Activated CD4-positive, alpha-beta memory T cell treated with anti-CD3 and anti-CD28 coated beads for 36 hours (primary cell): ENCODE measurements at regions of chr19 and their contacts with region 1.

Region 1: GRCh38 chr19:15101479-15102082 is 5.6 kb upstream of the SYDE1 start:
- DNase-seq: peak; percentile 76
- H3K4me3 Mint-ChIP-seq: no peak overlapping the region
- H3K27ac Mint-ChIP-seq: no peak overlapping the region
- H3K4me1 Mint-ChIP-seq: peaks cover 1% of the 10 kb centered on the region
- H3K27me3 Mint-ChIP-seq: peaks cover 12% of the 10 kb centered on the region

Region 2: GRCh38 chr19:15112386-15112785 is 10.8 kb after region 1 on chr19:
- CTCF ChIA-PET with region 1: interaction called, 10 read pairs
- POLR2A ChIA-PET with region 1: no interaction called
- intact Hi-C with region 1: no loop called
- DNase-seq: no peak
- H3K4me3 Mint-ChIP-seq: no peak overlapping the region
- H3K27ac Mint-ChIP-seq: no peak overlapping the region
- H3K4me1 Mint-ChIP-seq: peaks cover 6% of the 10 kb centered on the region
- H3K27me3 Mint-ChIP-seq: peaks cover 7% of the 10 kb centered on the region

Region 3: GRCh38 chr19:15146691-15147489 is 45.3 kb after region 1 on chr19:
- CTCF ChIA-PET with region 1: interaction called, 54 read pairs
- POLR2A ChIA-PET with region 1: no interaction called
- intact Hi-C with region 1: loop called (anchors 1 kb)
- DNase-seq: no peak
- H3K4me3 Mint-ChIP-seq: no peak overlapping the region
- H3K27ac Mint-ChIP-seq: no peak overlapping the region
- H3K4me1 Mint-ChIP-seq: peaks cover 4% of the 10 kb centered on the region
- H3K27me3 Mint-ChIP-seq: peaks cover 2% of the 10 kb centered on the region

Region 4: GRCh38 chr19:15154002-15154612 is 52.5 kb after region 1 on chr19:
- CTCF ChIA-PET with region 1: interaction called, 54 read pairs
- POLR2A ChIA-PET with region 1: no interaction called
- intact Hi-C with region 1: loop called (anchors 1 kb)
- DNase-seq: peak; percentile 65
- H3K4me3 Mint-ChIP-seq: no peak overlapping the region
- H3K27ac Mint-ChIP-seq: no peak overlapping the region
- H3K4me1 Mint-ChIP-seq: peaks cover 2% of the 10 kb centered on the region
- H3K27me3 Mint-ChIP-seq: peaks cover 5% of the 10 kb centered on the region

Region 5: DNA sequence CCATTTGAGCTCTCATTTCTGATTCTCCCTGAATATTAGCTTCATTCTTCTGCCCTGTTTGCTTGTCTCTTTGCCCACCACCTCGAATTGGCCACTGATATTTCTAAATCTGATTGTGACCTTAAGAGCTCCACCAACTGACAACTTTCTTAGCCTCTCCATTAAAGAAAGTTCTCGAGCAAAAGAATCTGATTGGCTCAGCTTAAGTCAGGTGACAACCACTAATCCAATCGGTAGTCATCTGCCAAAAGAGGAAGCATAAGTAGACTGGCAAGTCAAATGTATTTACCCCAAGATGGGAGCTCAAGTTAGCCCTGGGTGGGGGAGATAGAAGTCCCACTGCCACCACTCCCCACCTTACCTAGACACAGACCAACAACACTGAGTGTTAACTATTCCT is 57.7 kb after region 1 on chr19:
- CTCF ChIA-PET with region 1: interaction called, 34 read pairs
- POLR2A ChIA-PET with region 1: no interaction called
- intact Hi-C with region 1: no loop called
- DNase-seq: no peak
- H3K4me3 Mint-ChIP-seq: no peak overlapping the region
- H3K27ac Mint-ChIP-seq: no peak overlapping the region
- H3K4me1 Mint-ChIP-seq: no peaks in the 10 kb centered on the region
- H3K27me3 Mint-ChIP-seq: peaks cover 3% of the 10 kb centered on the region

Region 6: GRCh38 chr19:15280048-15280750 is 178.6 kb after region 1 on chr19:
- CTCF ChIA-PET with region 1: no interaction called
- POLR2A ChIA-PET with region 1: no interaction called
- intact Hi-C with region 1: no loop called
- DNase-seq: no peak
- H3K4me3 Mint-ChIP-seq: no peak overlapping the region
- H3K27ac Mint-ChIP-seq: peak overlapping the region; percentile 29
- H3K4me1 Mint-ChIP-seq: peaks cover 85% of the 10 kb centered on the region
- H3K27me3 Mint-ChIP-seq: no peaks in the 10 kb centered on the region